ENCODE measurements at regions of chr4 and their contacts with region 1.

Region 1: GRCh38 chr4:137881525-137882040 is 349.3 kb upstream of the PCDH18 start:
- DNase-seq: no peak
- ATAC-seq: no peak
- H3K4me3 ChIP-seq: no peak overlapping the region
- H3K27ac ChIP-seq: no peak overlapping the region
- H3K4me1 ChIP-seq: no peaks in the 10 kb centered on the region
- H3K27me3 ChIP-seq: no peaks in the 10 kb centered on the region

Region 2: DNA sequence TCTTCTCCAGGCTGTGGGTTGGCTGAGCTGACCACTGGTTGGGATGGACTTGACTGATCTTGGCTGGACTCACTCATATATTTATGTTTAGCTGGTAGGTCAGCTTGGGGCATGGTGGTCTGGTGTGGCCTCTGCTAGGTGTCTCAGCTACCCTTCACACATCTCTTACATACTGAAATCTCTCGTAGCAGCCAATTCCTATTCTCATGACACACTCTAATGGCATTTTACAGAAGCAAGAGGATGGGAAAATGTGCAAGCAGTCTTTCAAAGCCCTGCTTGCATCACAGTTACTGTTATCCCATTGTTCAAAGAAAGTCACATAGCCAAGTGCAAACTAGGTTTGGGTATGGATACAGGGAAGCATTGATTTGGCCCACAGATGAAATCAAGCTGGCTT is 293.8 kb before region 1 on chr4:
- intact Hi-C with region 1: no loop called
- DNase-seq: no peak
- ATAC-seq: no peak
- H3K4me3 ChIP-seq: no peak overlapping the region
- H3K27ac ChIP-seq: no peak overlapping the region
- H3K4me1 ChIP-seq: no peaks in the 10 kb centered on the region
- H3K27me3 ChIP-seq: no peaks in the 10 kb centered on the region

Region 3: GRCh38 chr4:137775701-137776100 is 105.9 kb before region 1 on chr4:
- intact Hi-C with region 1: no loop called
- DNase-seq: no peak
- ATAC-seq: no peak
- H3K4me3 ChIP-seq: no peak overlapping the region
- H3K27ac ChIP-seq: no peak overlapping the region
- H3K4me1 ChIP-seq: no peaks in the 10 kb centered on the region
- H3K27me3 ChIP-seq: no peaks in the 10 kb centered on the region

Region 4: DNA sequence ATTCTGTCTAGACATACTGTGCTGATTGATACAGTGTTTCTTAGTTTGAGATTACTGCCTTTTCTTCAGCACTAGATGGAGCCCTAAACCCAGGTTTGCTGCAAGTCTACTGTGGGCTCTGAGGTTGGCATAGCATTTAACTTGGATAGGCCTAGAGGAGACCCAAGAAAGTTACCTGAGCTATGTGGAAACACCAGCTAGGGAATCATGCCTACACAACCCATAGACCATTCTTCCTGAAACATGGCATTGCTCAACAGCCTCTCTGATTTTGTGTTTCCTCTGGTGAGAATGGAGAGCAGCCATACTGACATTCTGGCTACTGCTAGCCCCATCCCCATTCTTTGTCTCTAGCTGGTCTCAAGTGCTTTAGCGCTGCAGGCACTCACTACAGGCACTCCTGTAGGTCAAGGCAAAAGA is 61.6 kb before region 1 on chr4:
- intact Hi-C with region 1: loop called in 1 of 4 experiments (anchors 2 kb)
- DNase-seq: no peak
- ATAC-seq: peak in 1 of 2 donors; percentile 40
- H3K4me3 ChIP-seq: no peak overlapping the region
- H3K27ac ChIP-seq: no peak overlapping the region
- H3K4me1 ChIP-seq: no peaks in the 10 kb centered on the region
- H3K27me3 ChIP-seq: no peaks in the 10 kb centered on the region

Region 5: GRCh38 chr4:138035781-138036258 is 154.2 kb after region 1 on chr4:
- intact Hi-C with region 1: no loop called
- DNase-seq: no peak
- ATAC-seq: peak; percentile 75 to 81
- H3K4me3 ChIP-seq: no peak overlapping the region
- H3K27ac ChIP-seq: no peak overlapping the region
- H3K4me1 ChIP-seq: no peaks in the 10 kb centered on the region
- H3K27me3 ChIP-seq: no peaks in the 10 kb centered on the region

Region 6: GRCh38 chr4:138090150-138090917 is 208.8 kb after region 1 on chr4:
- intact Hi-C with region 1: no loop called
- DNase-seq: peak in 1 of 3 donors; percentile 46
- ATAC-seq: peak; percentile 83 to 85
- H3K4me3 ChIP-seq: no peak overlapping the region
- H3K27ac ChIP-seq: no peak overlapping the region
- H3K4me1 ChIP-seq: no peaks in the 10 kb centered on the region
- H3K27me3 ChIP-seq: no peaks in the 10 kb centered on the region

Measured in right cardiac atrium (tissue), 5 donors.